ENCODE measurements at regions of chr15 and their contacts with region 1.

Region 1: DNA sequence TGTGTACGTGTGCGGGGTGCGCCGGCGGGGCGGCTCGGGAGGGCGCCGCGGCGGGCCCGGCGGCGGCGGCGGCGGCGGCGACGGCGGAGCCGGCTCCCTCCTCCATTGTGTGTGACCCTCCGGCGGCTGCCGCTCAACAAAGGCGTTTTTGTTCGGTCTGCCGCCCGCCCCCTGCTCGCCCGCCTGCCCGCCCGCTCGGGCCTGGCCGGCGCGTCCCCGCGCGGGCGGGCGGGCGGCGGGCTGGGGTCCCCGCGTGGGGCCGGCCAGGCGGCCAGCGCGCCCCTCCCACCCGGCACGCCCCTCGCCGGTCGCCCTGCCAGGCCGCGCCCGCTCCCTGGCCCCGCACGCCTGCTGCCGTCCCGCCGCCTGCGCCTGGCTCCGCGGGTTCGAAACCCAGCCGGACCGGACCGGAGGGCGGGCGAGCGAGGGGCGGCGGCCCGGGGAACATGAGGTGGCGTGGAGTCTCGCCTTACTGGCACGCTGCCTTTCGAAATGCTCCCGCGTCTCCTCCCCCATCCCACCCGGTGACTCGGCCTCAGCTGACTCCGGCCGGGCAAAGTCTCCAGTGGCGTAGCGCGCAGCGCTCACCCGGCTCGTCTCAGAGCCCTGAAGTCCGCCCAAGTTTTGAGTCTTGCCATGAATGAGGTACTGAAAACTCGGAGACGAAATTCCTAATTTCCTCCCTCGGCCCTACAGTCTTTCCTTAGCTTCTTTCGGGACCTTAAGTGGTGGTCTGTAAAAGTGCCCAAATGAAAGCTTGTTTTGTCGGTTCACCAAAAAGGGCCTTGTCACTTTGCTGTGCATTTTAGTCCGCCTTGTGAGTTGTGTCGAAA is 585 bp downstream of the MAPK6 start:
- DNase-seq: peak; percentile 83
- ATAC-seq: peak; percentile 64
- H3K4me3 Mint-ChIP-seq: peak overlapping the region; percentile 94
- H3K27ac Mint-ChIP-seq: peak overlapping the region; percentile 99
- H3K4me1 Mint-ChIP-seq: peaks cover 42% of the 10 kb centered on the region
- H3K27me3 Mint-ChIP-seq: no peaks in the 10 kb centered on the region

Region 2: GRCh38 chr15:51907136-51907914 is 112.3 kb before region 1 on chr15:
- CTCF ChIA-PET with region 1: no interaction called
- DNase-seq: no peak
- ATAC-seq: no peak
- H3K4me3 Mint-ChIP-seq: no peak overlapping the region
- H3K27ac Mint-ChIP-seq: no peak overlapping the region
- H3K4me1 Mint-ChIP-seq: no peaks in the 10 kb centered on the region
- H3K27me3 Mint-ChIP-seq: no peaks in the 10 kb centered on the region

Region 3: GRCh38 chr15:52039925-52040781 is 20.5 kb after region 1 on chr15:
- CTCF ChIA-PET with region 1: interaction called, 18 read pairs
- DNase-seq: no peak
- ATAC-seq: peak; percentile 30
- H3K4me3 Mint-ChIP-seq: no peak overlapping the region
- H3K27ac Mint-ChIP-seq: peak overlapping the region; percentile 33
- H3K4me1 Mint-ChIP-seq: peaks cover 42% of the 10 kb centered on the region
- H3K27me3 Mint-ChIP-seq: no peaks in the 10 kb centered on the region

Region 4: GRCh38 chr15:52052066-52052935 is 32.7 kb after region 1 on chr15:
- CTCF ChIA-PET with region 1: no interaction called
- DNase-seq: no peak
- ATAC-seq: no peak
- H3K4me3 Mint-ChIP-seq: no peak overlapping the region
- H3K27ac Mint-ChIP-seq: no peak overlapping the region
- H3K4me1 Mint-ChIP-seq: peaks cover 5% of the 10 kb centered on the region
- H3K27me3 Mint-ChIP-seq: no peaks in the 10 kb centered on the region